B cell (primary cell): ENCODE measurements at regions of chr11 and their contacts with region 1.

Region 1: DNA sequence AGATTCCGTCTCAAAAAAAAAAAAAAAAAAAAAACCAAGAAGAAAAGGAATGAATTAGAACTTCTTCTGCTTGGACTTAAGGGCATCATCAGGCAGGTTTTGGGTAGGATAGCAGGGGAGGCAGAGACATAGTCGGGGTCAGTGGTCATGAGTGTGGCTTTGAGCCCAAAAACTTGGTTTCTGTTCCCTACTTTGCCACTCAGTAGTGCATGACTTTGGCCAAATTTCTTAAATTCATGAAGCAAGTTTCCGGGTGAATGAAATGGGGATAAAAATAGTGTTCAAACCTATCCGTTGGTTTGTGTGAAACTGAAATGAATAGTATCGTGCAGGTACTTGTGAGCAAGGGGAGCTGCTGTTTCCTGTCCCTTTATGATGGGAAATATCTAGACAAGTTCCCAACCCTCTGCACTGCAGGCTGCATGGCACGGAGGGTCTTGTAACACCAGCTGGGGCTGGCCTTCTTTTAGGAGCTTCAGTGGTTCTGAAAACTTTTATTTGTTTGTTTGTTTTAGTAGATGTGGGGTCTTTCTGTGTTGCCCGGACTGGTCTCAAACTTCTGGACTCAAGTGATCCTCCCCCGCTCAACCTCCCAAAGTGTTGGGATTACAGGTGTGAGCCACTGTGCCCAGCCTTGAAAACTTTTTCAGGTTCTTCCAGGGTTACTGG is 18.4 kb downstream of the NEAT1 start:
- DNase-seq: peak; percentile 81
- ATAC-seq: peak; percentile 40
- H3K4me3 ChIP-seq: peak overlapping the region in 3 of 5 experiments; percentile 24 to 48 (median 29)
- H3K4me3 Mint-ChIP-seq: peak overlapping the region; percentile 89
- H3K27ac ChIP-seq: peak overlapping the region; percentile 59 to 79
- H3K27ac Mint-ChIP-seq: peak overlapping the region; percentile 98
- H3K4me1 ChIP-seq: peaks cover 63 to 69% of the 10 kb centered on the region in 2 donors
- H3K4me1 Mint-ChIP-seq: peaks cover 62% of the 10 kb centered on the region
- H3K27me3 ChIP-seq: no peaks in the 10 kb centered on the region
- H3K27me3 Mint-ChIP-seq: no peaks in the 10 kb centered on the region
- CTCF ChIP-seq: no peak

Region 2: GRCh38 chr11:65425105-65425970 is 15.6 kb before region 1 on chr11:
- CTCF ChIA-PET with region 1: no interaction called
- POLR2A ChIA-PET with region 1: interaction called, 13 read pairs
- intact Hi-C with region 1: loop called (anchors 1 kb)
- DNase-seq: peak; percentile 94
- ATAC-seq: peak; percentile 36
- H3K4me3 ChIP-seq: peak overlapping the region; percentile 63 to 98 (median 75)
- H3K4me3 Mint-ChIP-seq: peak overlapping the region; percentile 92
- H3K27ac ChIP-seq: peak overlapping the region; percentile 91 to 97
- H3K27ac Mint-ChIP-seq: peak overlapping the region; percentile 100
- H3K4me1 ChIP-seq: peaks cover 79 to 88% of the 10 kb centered on the region in 2 donors
- H3K4me1 Mint-ChIP-seq: peaks cover 75% of the 10 kb centered on the region
- H3K27me3 ChIP-seq: no peaks in the 10 kb centered on the region
- H3K27me3 Mint-ChIP-seq: no peaks in the 10 kb centered on the region
- CTCF ChIP-seq: peak; percentile 37

Region 3: GRCh38 chr11:65454696-65455456 is 13.9 kb after region 1 on chr11:
- CTCF ChIA-PET with region 1: interaction called, 3 read pairs
- POLR2A ChIA-PET with region 1: interaction called, 3 read pairs
- intact Hi-C with region 1: loop called (anchors 1 kb)
- DNase-seq: peak; percentile 91
- ATAC-seq: peak; percentile 97
- H3K4me3 ChIP-seq: peak overlapping the region; percentile 63 to 80 (median 67)
- H3K4me3 Mint-ChIP-seq: peak overlapping the region; percentile 96
- H3K27ac ChIP-seq: peak overlapping the region; percentile 70
- H3K27ac Mint-ChIP-seq: peak overlapping the region; percentile 92
- H3K4me1 ChIP-seq: peaks cover 4 to 18% of the 10 kb centered on the region in 2 donors
- H3K4me1 Mint-ChIP-seq: peaks cover 32% of the 10 kb centered on the region
- H3K27me3 ChIP-seq: no peaks in the 10 kb centered on the region
- H3K27me3 Mint-ChIP-seq: no peaks in the 10 kb centered on the region
- CTCF ChIP-seq: no peak